ENCODE measurements at regions of chr20 and their contacts with region 1.

Region 1: GRCh38 chr20:24992487-24993205 is at the start of gene APMAP:
- DNase-seq: peak; percentile 93 to 99 (median 98)

Region 2: DNA sequence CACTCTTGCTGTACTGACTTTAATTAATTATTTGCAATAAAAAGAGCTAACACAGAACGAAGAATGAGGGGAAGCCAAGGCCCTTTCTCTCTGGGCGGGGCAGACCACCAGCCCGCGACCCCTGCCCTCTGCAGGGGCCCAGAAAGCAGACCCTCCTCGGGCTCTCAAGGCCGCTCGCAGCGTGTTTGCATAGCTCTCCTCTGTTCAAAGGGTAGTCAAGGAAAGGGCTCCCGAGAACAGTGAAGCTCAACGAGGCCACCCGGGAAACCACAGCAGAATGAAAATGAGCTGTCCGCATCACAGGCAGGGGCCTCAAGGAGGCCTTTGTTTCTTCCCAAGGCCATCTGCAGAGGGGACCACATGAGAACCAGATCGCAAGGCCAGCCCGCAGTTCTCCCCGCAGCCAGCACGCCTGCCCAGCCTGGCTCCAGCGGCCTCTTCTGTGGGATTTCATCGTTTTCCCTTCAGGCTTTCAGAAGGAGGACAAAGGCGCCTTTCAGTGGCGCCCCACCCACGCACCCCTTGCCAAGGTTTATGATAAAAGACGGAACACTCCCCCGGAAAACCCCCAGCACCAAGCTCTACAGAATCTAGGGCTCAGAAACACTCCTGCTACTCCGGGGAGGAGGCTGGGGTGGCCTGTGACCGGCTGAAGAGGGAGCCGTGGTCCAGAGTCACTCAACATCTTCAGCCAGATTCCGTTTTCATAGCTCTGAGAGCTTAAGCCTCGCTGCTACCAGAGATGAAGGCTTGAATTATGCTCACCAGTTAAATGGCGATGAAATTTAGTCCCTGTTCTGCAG is 40.0 kb after region 1 on chr20:
- intact Hi-C with region 1: loop called (anchors 5 kb)
- DNase-seq: peak; percentile 86 to 98 (median 94)

Region 3: DNA sequence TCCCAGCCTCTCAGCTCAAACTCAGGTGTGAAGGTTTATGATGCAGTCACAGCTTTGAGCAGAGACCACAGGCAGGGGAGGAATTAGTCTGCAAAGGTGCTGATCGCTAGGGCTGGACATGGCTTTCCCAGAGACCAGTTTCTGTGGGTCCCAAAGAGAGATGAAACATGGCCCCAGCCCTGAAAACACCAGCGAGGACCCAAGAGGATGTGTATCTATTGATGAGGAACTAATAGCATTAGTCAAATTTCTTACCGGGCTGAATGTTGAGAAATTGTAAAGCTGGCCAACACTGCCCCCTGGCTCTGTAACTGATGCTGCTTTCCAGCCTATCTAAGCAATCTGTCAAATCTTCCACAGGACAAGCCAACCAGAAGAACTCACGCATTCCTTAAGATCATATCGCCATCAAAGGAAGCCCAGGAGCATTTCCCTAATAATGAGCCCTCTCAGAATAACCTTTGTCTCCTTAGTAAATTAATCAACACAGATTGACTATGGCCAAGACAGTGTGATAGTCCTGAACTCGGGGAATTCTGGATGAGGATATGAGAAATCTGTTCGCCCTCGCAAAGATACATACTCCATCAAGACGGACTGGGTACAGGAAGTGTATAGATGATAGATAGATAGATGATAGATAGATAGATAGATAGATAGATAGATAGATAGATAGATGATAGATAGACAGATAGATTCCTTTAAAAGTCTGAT is 73.1 kb after region 1 on chr20:
- intact Hi-C with region 1: loop called (anchors 2 kb)
- DNase-seq: peak in 41 of 42 donors; percentile 49 to 90 (median 76)

Region 4: DNA sequence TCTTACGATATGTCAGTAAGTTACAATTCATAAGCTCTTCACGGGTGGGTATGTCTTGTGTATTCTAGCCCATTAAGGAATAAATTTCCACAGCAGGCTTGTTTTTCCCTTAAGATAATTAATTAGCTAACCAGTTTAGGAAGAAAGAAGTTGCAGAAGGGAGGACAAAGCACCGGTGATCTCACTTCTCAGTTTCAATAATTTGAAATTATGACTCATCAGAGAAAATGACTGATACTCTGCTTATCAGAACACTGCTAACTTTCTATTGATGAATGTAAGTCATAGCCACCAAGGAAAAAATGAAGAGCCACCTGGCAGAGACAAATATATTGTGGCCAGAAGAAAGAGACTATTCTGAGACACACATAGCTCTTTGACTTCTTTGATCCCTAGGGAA is 167.8 kb after region 1 on chr20:
- intact Hi-C with region 1: no loop called
- DNase-seq: no peak

Region 5: GRCh38 chr20:25178563-25179438 is 186.2 kb after region 1 on chr20:
- intact Hi-C with region 1: loop called (anchors 5 kb)
- DNase-seq: peak in 13 of 42 donors; percentile 6 to 62 (median 40)

Region 6: DNA sequence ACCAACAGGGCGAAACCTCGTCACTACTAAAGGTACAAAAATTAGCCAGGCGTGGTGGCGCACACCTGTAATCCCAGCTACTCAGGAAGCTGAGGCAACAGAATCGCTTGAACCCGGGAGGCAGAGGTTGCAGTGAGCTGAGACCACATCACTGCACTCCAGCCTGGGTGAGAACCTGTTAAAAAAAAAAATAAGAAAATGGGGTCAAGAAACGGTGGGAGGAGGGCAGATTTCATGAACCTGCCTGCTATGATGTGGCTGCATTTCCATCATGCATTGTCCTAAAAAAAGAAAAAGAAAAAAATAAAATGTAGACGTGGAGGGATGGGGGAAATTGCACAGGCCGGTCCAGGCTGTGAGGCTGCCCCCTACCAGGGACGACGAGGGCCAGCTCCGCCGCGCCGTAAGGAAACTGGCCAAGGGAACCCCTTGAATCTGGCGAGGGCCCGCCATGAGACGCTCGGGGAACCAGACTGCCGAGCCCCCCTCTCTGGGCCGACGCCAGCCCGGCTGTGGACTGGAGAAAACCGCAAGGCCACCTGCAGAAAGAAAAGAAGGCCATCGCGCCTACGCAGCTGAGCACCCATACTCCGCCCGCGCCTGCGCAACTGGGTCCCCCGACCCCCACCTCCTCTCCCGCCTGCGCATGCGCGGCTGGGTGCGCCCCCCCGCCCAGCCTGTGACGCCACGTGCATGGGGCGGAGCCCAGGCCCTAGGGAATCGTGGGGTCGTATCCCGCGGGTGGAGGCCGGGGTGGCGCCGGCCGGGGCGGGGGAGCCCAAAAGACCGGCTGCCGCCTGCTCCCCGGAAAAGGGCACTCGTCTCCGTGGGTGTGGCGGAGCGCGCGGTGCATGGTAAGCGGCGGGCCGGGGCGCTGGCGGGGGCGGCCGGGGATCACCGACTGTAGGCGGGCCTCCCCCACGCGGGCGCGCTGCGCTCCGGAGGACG is 202.6 kb after region 1 on chr20 and contains the start of gene ENTPD6:
- intact Hi-C with region 1: loop called (anchors 5 kb)
- DNase-seq: peak; percentile 77 to 96 (median 92)

Region 7: DNA sequence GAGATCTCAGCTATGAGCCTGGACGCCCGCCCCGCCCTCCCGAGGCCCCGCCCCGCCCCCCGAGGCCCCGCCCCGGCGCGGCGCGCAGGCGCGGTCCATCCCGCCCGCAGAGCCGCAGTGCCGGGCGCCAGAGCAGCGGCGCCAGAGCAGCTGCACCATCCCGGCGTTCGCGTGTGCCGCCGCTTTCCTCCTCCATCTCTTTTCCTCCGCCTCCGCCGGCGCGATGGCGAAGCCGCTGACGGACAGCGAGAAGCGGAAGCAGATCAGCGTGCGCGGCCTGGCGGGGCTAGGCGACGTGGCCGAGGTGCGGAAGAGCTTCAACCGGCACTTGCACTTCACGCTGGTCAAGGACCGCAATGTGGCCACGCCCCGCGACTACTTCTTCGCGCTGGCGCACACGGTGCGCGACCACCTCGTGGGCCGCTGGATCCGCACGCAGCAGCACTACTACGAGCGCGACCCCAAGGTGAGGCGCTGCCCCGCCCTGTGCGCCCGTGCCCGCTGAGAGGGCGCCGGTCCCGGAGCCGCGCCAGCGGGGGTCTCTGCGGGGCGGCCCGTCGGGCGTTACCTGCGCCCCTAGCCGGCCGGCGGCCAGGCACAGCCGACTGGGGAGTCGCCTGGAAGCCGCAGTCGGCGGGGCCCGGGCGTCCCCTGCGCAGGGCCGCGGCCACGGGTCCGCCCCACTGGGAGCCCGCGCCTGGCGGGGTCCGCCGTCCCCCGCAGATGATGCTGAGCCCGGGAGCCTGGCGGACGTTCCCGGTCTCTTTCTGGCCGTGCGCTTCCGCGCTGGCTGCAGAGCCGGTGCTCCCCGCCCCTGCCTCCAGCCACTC is 255.5 kb after region 1 on chr20 and contains the start of gene PYGB:
- intact Hi-C with region 1: loop called (anchors 5 kb)
- DNase-seq: peak; percentile 34 to 90 (median 82)

Region 8: GRCh38 chr20:25390538-25391528 is 398.2 kb after region 1 on chr20 and contains the start of gene ABHD12:
- intact Hi-C with region 1: loop called (anchors 5 kb)
- DNase-seq: peak; percentile 91 to 99 (median 97)